ENCODE measurements at regions of chr1 and their contacts with region 1.

Region 1: DNA sequence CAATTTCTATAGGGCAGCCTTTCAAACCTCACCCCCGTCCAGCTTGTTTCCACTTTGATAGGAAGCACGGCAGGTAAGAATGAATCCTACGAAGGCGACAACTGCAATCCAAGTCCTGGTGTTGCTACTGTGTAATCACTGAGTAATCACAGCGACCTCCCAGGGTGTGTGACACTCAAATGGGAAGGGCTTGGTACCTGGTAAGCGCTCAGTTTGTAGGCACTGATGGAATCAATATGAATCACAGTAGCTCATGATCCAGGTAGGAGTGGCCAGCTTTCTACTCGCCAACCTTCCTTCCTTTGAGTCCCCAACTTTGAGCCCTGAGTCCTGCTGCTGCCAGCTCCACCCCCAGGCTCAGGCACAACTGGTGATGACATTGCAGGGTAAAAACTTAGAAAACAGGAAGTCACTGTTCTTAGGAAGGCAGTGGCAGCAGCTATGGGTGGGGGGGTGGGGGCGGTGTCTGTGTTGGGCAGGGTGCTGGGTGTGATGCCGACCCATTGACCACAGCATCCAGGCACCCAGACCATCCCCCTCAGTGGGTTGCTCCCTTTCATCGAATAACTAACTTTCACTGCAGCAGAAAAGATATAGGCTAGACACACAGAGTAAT is 70.7 kb downstream of the CD247 start:
- DNase-seq: peak; percentile 90
- H3K4me3 Mint-ChIP-seq: peak overlapping the region; percentile 56
- H3K27ac Mint-ChIP-seq: peak overlapping the region; percentile 95
- H3K4me1 Mint-ChIP-seq: peaks cover 74% of the 10 kb centered on the region
- H3K27me3 Mint-ChIP-seq: no peaks in the 10 kb centered on the region

Region 2: DNA sequence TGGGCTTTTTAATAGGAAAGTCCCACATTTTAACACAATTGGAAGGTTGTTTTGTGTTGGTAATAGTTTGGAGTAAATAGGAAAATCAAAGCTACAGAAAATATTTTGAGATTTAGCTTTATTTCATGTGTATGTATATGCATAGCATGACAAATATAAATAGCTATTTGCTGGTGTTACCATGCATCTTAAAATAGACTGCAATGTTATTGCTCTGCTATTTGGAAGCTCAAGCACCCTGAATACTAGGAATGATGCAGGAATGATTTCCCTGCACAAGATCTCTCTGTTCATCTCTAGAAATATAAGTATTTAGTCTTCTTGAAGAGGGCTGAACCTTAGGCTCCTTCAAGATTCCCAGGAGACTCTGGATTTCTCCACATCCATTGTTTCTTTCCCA is 876.7 kb before region 1 on chr1:
- CTCF ChIA-PET with region 1: no interaction called
- POLR2A ChIA-PET with region 1: no interaction called
- intact Hi-C with region 1: no loop called
- DNase-seq: no peak
- H3K4me3 Mint-ChIP-seq: no peak overlapping the region
- H3K27ac Mint-ChIP-seq: no peak overlapping the region
- H3K4me1 Mint-ChIP-seq: no peaks in the 10 kb centered on the region
- H3K27me3 Mint-ChIP-seq: no peaks in the 10 kb centered on the region

Region 3: GRCh38 chr1:166975361-166976129 is 472.1 kb before region 1 on chr1 and contains the start of gene ILDR2:
- CTCF ChIA-PET with region 1: no interaction called
- POLR2A ChIA-PET with region 1: no interaction called
- intact Hi-C with region 1: loop called (anchors 2 kb)
- DNase-seq: peak; percentile 88
- H3K4me3 Mint-ChIP-seq: peak within 1 kb of the TSS; percentile 88
- H3K27ac Mint-ChIP-seq: peak within 1 kb of the TSS; percentile 88
- H3K4me1 Mint-ChIP-seq: peaks cover 47% of the 10 kb centered on the region
- H3K27me3 Mint-ChIP-seq: peaks cover 16% of the 10 kb centered on the region
- total RNA-seq, gene ILDR2: 12.5 to 13.0 TPM

Region 4: GRCh38 chr1:167373398-167373797 is 74.2 kb before region 1 on chr1:
- CTCF ChIA-PET with region 1: no interaction called
- POLR2A ChIA-PET with region 1: no interaction called
- intact Hi-C with region 1: no loop called
- DNase-seq: no peak
- H3K4me3 Mint-ChIP-seq: no peak overlapping the region
- H3K27ac Mint-ChIP-seq: no peak overlapping the region
- H3K4me1 Mint-ChIP-seq: no peaks in the 10 kb centered on the region
- H3K27me3 Mint-ChIP-seq: no peaks in the 10 kb centered on the region

Region 5: GRCh38 chr1:167491586-167492461 is 44.2 kb after region 1 on chr1:
- CTCF ChIA-PET with region 1: interaction called, 4 read pairs
- POLR2A ChIA-PET with region 1: interaction called, 4 read pairs
- intact Hi-C with region 1: loop called (anchors 2 kb)
- DNase-seq: peak; percentile 67
- H3K4me3 Mint-ChIP-seq: peak overlapping the region; percentile 61
- H3K27ac Mint-ChIP-seq: peak overlapping the region; percentile 89
- H3K4me1 Mint-ChIP-seq: peaks cover 93% of the 10 kb centered on the region
- H3K27me3 Mint-ChIP-seq: no peaks in the 10 kb centered on the region

Region 6: GRCh38 chr1:167517535-167518330 is 70.1 kb after region 1 on chr1:
- CTCF ChIA-PET with region 1: interaction called, 19 read pairs
- POLR2A ChIA-PET with region 1: interaction called, 58 read pairs
- intact Hi-C with region 1: loop called (anchors 1 kb)
- DNase-seq: peak; percentile 96
- H3K4me3 Mint-ChIP-seq: peak overlapping the region; percentile 88
- H3K27ac Mint-ChIP-seq: peak overlapping the region; percentile 98
- H3K4me1 Mint-ChIP-seq: peaks cover 35% of the 10 kb centered on the region
- H3K27me3 Mint-ChIP-seq: no peaks in the 10 kb centered on the region

Region 7: DNA sequence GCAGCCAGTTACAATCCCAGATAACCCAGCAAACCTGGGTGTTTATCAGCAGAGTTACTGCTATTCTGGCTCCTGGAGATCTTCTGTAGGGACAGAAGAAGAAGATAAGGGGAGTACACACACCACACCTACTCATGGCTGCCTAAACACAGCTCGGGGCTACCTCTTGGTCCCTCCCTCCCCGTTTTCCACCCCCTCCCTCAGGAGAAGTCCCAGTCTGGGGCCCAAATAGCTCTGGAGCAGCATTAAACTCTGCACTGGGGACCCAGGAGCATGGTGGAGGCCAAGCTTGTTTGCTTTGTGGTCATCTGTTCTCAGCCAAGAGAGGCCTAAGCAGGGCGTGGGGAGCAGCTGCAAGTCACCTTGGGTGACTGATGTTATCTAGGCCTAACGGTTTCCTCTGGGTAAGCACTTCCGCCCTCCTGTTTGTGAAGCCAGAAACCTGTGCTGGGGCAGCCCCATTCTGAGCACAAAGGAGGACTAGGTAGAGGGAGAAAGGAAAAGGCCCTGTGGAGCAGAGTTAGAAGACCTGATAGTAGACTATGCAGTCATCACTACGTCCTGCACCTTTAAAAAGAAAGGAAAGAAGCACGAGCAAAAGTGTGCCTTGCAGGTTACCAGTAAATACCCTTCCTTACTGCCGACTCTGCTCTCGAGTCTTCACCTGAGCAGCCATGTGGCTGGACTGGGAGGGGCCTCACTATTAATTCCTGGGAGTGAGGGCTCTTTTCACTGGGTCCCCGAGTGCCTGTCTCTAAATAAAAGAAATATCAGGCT is 180.4 kb after region 1 on chr1:
- CTCF ChIA-PET with region 1: no interaction called
- POLR2A ChIA-PET with region 1: no interaction called
- intact Hi-C with region 1: loop called (anchors 5 kb)
- DNase-seq: peak; percentile 90
- H3K4me3 Mint-ChIP-seq: peak overlapping the region; percentile 92
- H3K27ac Mint-ChIP-seq: peak overlapping the region; percentile 99
- H3K4me1 Mint-ChIP-seq: peaks cover 46% of the 10 kb centered on the region
- H3K27me3 Mint-ChIP-seq: no peaks in the 10 kb centered on the region